ENCODE measurements at regions of chr5 and their contacts with region 1.

Region 1: DNA sequence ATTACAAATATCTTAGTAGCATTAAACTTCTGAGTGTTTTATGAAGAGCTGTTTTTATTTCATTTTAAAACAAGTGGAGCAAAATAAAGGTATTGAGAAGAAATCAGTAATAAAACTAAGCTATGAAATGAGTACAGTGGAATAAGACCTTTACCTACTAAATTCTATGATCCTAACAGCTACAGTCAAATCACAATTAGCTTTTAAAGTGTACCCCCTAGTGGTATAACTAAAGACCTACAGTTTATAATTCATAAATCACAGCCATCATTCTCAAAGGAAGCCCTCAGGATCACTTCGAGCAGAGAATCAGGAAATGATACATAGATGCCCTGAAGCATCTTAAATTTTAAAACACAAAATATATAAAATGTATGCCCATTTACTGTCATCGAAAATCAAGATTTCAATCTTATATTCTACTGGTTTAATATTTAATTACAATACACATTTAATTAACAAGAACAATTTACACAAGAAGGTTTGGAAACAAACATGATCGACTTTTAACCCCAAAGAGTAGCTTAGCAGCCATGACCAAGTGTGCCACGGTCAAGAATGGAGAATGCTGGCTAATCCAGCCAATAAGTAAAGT is 12.3 kb downstream of the CCNH start:
- DNase-seq: no peak
- ATAC-seq: peak in 1 of 2 donors; percentile 73
- H3K4me3 ChIP-seq: no peak overlapping the region
- H3K27ac ChIP-seq: no peak overlapping the region
- H3K4me1 ChIP-seq: peaks cover 0 to 7% of the 10 kb centered on the region in 2 donors
- H3K27me3 ChIP-seq: no peaks in the 10 kb centered on the region
- CTCF ChIP-seq: peak; percentile 33 to 67 (median 65)
- POLR2A ChIP-seq: no peak

Region 2: DNA sequence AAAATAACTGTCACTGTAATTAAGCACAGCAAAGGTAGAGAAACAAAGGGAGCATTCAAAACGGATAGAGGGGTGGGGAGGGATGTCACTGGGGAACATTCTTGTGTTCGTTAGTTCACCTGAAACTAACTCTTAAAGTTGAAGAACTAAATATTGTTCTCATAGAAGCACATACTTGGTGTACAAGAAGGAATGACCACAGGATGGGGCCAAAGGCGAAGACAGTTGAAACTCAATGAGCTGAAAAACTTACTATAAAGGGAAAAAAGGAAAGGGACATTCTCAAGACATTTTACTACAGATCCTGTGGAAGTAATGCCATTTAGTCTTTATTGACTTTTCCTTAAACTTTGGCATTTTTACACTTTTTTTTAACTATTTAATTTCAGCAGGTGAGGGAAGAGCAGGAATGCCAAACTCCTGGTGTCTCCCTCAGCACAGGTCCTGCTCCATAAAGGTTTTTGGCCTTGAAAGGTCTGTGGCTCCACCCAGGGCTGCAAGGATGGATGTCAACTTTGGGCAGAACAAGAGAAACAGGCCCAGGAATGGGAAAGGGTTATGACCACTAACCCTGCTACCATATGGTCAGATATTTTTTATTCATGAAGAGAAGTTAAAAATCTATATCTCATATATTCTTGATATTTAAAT is 330.3 kb before region 1 on chr5:
- in situ Hi-C with region 1: loop called in 1 of 4 experiments (anchors 25 kb)
- intact Hi-C with region 1: loop called (anchors 5 kb)
- DNase-seq: no peak
- ATAC-seq: no peak
- H3K4me3 ChIP-seq: no peak overlapping the region
- H3K27ac ChIP-seq: no peak overlapping the region
- H3K4me1 ChIP-seq: no peaks in the 10 kb centered on the region
- H3K27me3 ChIP-seq: no peaks in the 10 kb centered on the region
- CTCF ChIP-seq: no peak
- POLR2A ChIP-seq: no peak

Region 3: DNA sequence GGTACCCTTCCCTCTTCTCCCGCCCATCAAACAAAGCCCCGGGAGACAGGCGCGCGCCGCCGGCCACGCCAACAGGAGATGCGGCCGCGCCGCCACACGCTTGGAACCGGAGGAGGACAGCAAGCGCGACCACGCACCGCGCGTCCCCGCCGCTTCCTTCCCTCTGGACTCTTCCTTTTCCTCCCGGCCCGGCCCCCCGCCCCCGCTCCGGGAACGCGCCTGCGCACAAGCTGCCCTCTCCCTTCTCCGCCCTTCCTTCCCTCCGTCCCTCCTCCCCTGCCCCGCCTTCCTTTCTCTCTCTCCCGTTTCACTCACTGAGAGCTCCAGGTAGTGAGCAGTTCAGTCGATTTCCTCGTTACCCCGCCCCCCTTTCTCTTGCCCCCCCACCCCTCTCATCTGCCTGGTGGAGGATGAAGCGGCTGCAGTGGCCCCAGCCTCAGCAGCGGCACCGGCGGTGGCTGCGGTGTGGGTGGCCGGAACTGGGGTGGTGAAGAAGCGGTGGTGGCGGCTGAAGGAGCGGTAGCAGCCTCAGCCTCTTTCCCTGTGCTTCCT is 132.8 kb before region 1 on chr5 and contains the start of gene RASA1:
- in situ Hi-C with region 1: loop called in 1 of 4 experiments (anchors 10 kb)
- intact Hi-C with region 1: no loop called
- DNase-seq: peak; percentile 91 to 92
- ATAC-seq: peak; percentile 93 to 96
- H3K4me3 ChIP-seq: peak within 1 kb of the TSS; percentile 86 to 99 (median 94)
- H3K27ac ChIP-seq: peak within 1 kb of the TSS; percentile 84 to 93 (median 91)
- H3K4me1 ChIP-seq: peaks cover 14 to 15% of the 10 kb centered on the region in 2 donors
- H3K27me3 ChIP-seq: no peaks in the 10 kb centered on the region
- CTCF ChIP-seq: no peak
- POLR2A ChIP-seq: peak; percentile 77 to 78
- total RNA-seq, gene RASA1: 12.0 to 16.8 (median 12.2) TPM

Measured in gastrocnemius medialis (tissue), 4 donors.